Transverse colon (tissue), 4 donors: ENCODE measurements at regions of chrX and their contacts with region 1.

Region 1: GRCh38 chrX:51144852-51145442 is 187.7 kb upstream of the NUDT10 start:
- DNase-seq: no peak
- H3K4me3 ChIP-seq: no peak overlapping the region
- H3K27ac ChIP-seq: no peak overlapping the region
- H3K4me1 ChIP-seq: no peaks in the 10 kb centered on the region
- H3K27me3 ChIP-seq: no peaks in the 10 kb centered on the region
- CTCF ChIP-seq: peak; percentile 24 to 57 (median 47)
- EP300 ChIP-seq: no peak
- POLR2A ChIP-seq: no peak

Region 2: DNA sequence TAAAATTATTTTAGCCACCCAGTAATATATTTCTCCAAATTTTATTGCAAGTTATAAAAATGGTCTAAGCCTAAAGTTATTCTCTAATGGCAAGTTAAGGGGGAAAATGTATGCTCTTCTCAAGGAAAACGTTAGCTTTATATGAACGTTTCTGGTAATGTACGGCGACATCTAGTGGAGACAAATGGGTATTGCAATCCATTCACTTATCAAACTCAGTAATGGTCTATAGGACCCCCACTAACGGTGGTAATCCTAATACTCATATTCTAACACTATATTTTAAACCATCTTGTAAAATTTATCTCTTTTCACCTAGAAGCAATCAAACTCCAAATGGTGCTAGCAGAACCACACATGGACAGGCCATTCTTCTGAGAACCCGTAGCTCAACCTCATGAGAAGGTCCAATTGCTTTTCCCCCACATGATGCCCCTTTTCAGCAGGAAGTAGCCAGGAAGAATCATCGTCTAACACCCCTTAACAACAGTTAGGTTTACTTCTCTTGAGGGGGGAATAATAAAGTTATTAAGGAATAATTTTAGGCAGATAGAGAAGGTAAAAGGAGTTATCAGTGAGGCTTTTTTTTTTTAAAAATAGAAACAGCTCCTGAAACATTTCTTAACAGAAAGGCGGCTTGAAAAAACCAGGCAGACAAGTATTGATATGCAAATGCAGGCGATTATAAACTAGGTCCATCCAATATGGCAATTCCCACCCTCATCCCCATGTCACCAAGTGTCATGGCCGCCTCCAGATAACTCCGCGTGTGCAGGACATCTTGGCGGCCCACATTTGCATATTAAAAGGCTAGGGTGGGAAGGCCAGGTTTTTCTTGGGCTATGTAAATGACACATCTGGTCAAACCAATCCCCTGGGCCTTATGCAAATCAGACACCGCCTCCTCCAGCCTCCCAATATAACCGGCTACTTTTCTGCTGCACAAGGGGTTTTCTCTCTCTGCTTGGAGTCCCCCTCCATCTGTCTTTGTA is 316.4 kb after region 1 on chrX:
- in situ Hi-C with region 1: loop called in 1 of 4 experiments (anchors 25 kb)
- intact Hi-C with region 1: no loop called
- DNase-seq: no peak
- H3K4me3 ChIP-seq: no peak overlapping the region
- H3K27ac ChIP-seq: no peak overlapping the region
- H3K4me1 ChIP-seq: no peaks in the 10 kb centered on the region
- H3K27me3 ChIP-seq: no peaks in the 10 kb centered on the region
- CTCF ChIP-seq: peak; percentile 44 to 92 (median 68)
- EP300 ChIP-seq: no peak
- POLR2A ChIP-seq: no peak